ENCODE measurements at regions of chr7 and their contacts with region 1.

Region 1: GRCh38 chr7:132764762-132765161 is 188.5 kb upstream of the PLXNA4 start:
- DNase-seq: no peak
- ATAC-seq: no peak
- H3K4me3 ChIP-seq: no peak overlapping the region
- H3K27ac ChIP-seq: no peak overlapping the region
- H3K4me1 ChIP-seq: no peaks in the 10 kb centered on the region
- H3K27me3 ChIP-seq: peaks cover 0 to 2% (median 0%) of the 10 kb centered on the region in 3 donors
- CTCF ChIP-seq: no peak

Region 2: GRCh38 chr7:132380059-132380458 is 384.7 kb before region 1 on chr7:
- intact Hi-C with region 1: no loop called
- DNase-seq: no peak
- ATAC-seq: peak; percentile 21 to 63 (median 45)
- H3K4me3 ChIP-seq: no peak overlapping the region
- H3K27ac ChIP-seq: no peak overlapping the region
- H3K4me1 ChIP-seq: no peaks in the 10 kb centered on the region
- H3K27me3 ChIP-seq: peaks cover 0 to 7% (median 0%) of the 10 kb centered on the region in 3 donors
- CTCF ChIP-seq: no peak

Region 3: GRCh38 chr7:132836743-132837142 is 72.0 kb after region 1 on chr7:
- intact Hi-C with region 1: loop called in 1 of 2 experiments (anchors 2 kb)
- DNase-seq: no peak
- ATAC-seq: peak in 3 of 4 donors; percentile 37 to 52 (median 48)
- H3K4me3 ChIP-seq: no peak overlapping the region
- H3K27ac ChIP-seq: no peak overlapping the region
- H3K4me1 ChIP-seq: peaks cover 7% of the 10 kb centered on the region
- H3K27me3 ChIP-seq: no peaks in the 10 kb centered on the region
- CTCF ChIP-seq: no peak